Posterior vena cava (tissue), 2 donors: ENCODE measurements at regions of chr2 and their contacts with region 1.

Region 1: GRCh38 chr2:67840460-67841068 is 222.2 kb downstream of the C1D start:
- DNase-seq: peak; percentile 88

Region 2: GRCh38 chr2:66574701-66575624 is 1265.6 kb before region 1 on chr2:
- intact Hi-C with region 1: loop called in 1 of 2 experiments (anchors 5 kb)
- DNase-seq: peak; percentile 89

Region 3: GRCh38 chr2:67733517-67733916 is 107.0 kb before region 1 on chr2:
- intact Hi-C with region 1: loop called in 1 of 2 experiments (anchors 10 kb)
- DNase-seq: no peak